ENCODE measurements at regions of chr1 and their contacts with region 1.

Region 1: GRCh38 chr1:57550092-57550491 is 126.2 kb upstream of the DAB1 start:
- DNase-seq: no peak
- H3K4me3 ChIP-seq: no peak overlapping the region
- H3K27me3 ChIP-seq: no peaks in the 10 kb centered on the region; the same call in 1 of the 2 replicates
- CTCF ChIP-seq: no peak

Region 2: DNA sequence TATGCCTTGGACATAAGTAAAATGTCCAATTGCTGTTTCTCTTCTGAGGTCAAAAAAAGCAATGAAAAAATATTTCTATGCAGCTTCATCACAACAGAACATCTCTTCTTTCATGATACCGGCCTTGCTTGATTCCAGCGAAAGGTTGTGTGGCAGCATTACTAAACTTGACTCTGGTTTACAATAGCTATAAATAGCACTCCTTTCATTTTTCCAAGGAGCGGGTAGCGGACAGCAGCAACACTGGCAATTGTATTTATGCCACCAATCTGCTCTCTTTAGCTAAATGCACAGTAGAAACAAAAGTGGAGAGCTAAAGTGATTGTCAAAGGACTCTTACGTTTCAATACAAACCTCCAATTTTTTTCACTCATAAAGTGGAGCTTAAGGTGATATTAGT is 118.7 kb before region 1 on chr1:
- CTCF ChIA-PET with region 1: no interaction called
- POLR2A ChIA-PET with region 1: no interaction called
- DNase-seq: no peak
- H3K4me3 ChIP-seq: no peak overlapping the region
- H3K27me3 ChIP-seq: no peaks in the 10 kb centered on the region
- CTCF ChIP-seq: no peak

Region 3: DNA sequence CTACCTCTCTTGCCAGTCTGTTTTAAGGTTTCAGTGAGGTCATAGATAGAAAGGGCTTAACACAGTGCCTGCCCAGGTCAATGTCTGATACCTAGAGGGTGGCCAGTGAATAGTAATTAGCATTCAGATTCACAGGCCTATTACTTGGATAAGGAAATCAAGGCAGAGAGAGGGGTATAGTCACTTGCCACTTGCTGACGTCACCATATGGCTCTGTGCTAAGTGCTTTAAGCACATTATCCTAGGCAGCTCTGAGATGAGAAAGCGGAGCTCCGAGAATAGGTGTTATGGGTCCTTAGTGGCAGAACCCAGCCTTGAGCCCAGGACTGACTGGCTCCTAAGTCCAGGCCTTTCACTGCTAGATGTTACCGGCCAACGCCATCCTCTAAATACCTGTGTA is 74.7 kb before region 1 on chr1:
- CTCF ChIA-PET with region 1: no interaction called
- POLR2A ChIA-PET with region 1: interaction called, 17 read pairs
- DNase-seq: no peak
- H3K4me3 ChIP-seq: no peak overlapping the region
- H3K27me3 ChIP-seq: no peaks in the 10 kb centered on the region
- CTCF ChIP-seq: no peak

Measured in BJ (cell line).